ENCODE measurements at regions of chr3 and their contacts with region 1.

Region 1: DNA sequence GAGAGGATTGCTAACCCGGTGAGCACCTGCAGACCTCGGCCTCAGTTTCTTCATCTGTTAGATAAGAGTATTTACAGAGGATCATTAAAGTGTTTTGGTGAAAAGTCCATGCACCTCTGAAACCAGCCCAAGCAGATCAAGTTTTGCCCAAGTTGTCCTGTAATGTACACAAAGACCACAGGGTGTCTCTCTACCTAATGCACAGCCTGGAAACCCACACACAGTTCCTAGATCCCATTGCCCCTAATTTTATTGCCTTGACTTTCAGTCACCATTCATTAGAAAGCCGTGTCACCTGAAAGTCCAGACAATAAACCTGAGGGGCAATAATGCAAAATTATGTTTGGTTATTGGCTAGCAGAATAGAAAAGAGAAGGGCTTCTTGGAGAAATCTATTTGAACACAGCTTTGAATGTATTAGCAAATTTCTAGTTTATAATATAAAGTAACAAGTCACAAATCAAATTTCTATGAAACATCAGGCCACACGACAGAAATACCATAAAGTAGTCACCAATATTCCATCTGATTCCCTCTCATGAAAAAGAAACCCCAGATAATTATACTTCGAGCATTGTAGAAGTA is 161.3 kb upstream of the SLC2A2 start:
- DNase-seq: peak; percentile 65

Region 2: DNA sequence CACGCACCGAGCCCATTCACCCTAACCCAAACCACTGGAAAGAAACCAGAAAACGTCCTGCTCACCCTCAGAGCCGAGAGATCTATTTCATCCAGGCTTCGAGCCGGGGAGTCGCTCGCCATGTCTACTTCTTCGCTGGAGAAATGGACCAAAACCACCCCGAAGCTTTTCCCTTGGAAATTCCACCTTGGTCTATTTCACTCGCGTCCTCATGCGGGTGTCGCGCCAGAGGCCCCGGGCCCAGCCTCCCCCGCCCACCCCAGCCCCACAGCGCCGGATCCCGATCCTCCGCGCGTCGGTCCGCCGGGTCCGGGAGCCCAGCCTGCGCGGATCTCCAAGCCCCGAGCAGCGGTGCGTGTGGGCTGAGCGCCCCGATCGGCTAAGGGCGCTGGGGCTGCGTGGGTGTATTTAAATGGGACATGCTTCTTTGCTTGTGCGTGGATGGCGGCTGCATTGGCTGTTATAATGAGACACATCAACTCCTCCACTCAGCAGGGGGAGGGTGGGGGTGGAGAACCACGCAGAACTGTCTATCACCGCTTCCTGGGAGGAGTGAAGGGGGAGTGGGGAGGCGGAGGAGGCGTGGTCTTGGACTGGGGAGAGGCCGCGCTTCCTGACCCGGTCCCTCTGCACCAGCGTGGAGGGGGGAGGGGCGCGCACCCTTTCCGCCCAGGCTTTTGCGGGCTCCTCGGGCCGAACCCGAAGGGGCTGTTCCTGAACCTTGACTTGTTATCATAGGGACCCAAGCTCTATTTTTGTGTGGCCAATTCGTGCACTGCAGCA is 272.3 kb after region 1 on chr3 and contains the start of gene TNIK:
- in situ Hi-C with region 1: loop called (anchors 25 kb)
- DNase-seq: peak; percentile 94

Measured in KBM-7 (cell line).